Common myeloid progenitor, CD34-positive (primary cell): ENCODE measurements at regions of chr9 and their contacts with region 1.

Region 1: DNA sequence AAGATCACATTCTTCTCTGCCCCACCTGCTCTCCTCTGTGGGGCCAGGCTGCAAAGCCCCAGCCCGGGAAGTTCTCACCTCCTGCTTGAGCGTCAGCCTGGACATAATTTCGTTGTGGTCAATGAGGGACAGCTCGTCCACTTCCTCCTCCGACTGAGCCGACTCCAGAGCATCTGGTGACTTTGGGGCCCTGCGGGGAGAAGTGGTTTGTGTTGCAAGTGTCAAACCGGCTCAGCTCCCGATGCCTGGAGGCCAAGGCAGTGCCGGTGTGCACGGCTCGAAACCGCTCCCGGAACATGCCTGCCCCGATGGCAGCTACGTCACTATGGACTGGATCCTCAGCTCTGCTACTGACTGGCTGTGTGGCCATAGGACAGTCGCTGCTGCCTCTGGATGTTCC is 52.8 kb downstream of the PRRT1B start:
- DNase-seq: peak in 2 of 3 donors; percentile 53 to 59
- H3K4me3 ChIP-seq: no peak overlapping the region
- H3K27ac ChIP-seq: no peak overlapping the region
- H3K4me1 ChIP-seq: peaks cover 0 to 25% (median 7%) of the 10 kb centered on the region in 4 experiments
- H3K27me3 ChIP-seq: no peaks in the 10 kb centered on the region

Region 2: GRCh38 chr9:131747356-131747755 is 149.2 kb after region 1 on chr9:
- CTCF ChIA-PET with region 1: interaction called, 148 read pairs
- POLR2A ChIA-PET with region 1: no interaction called
- DNase-seq: peak; percentile 70 to 83 (median 82)
- H3K4me3 ChIP-seq: no peak overlapping the region
- H3K27ac ChIP-seq: no peak overlapping the region
- H3K4me1 ChIP-seq: peaks cover 0 to 20% (median 9%) of the 10 kb centered on the region in 4 experiments
- H3K27me3 ChIP-seq: no peaks in the 10 kb centered on the region